ENCODE measurements at regions of chr1 and their contacts with region 1.

Region 1: DNA sequence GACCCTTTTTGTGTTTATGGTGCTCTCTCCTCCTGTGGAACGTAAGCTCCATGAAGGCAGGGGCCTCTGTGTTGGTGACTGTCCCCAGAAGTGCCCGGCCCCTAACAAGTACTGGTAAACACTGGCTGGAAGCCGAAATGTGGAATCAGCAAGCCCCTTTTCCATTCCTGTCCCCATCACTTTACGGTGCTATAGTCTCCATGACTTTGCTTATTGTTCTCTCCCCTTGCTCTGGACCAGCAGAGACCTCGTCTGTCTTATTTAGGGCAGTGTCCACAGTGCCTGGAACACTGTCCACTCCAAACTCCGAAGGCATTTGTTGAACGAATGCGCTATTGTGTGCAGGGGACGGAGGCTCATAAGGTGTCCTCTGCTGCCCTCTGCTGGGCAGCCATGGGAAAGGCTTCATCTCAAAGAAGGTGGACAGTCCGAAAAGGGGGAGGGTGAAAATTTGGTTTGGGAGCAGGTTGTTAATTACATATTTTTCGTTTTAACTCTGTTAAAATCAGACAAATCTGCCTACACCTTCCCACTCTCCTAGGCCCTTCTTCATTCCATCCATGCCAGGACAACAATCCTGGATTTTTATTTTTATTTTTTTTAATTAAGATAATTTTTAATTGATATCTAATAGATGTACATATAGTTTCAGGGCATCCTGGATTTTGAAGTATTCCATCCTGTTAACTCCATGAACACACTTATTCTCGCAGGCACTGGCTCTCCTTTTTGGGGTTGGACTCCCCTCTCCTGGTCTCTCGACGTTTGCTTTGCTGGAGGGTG is 115.6 kb downstream of the PGBD5 start:
- DNase-seq: peak; percentile 64
- ATAC-seq: peak; percentile 80
- H3K4me3 Mint-ChIP-seq: no peak overlapping the region
- H3K27ac Mint-ChIP-seq: no peak overlapping the region
- H3K4me1 Mint-ChIP-seq: peaks cover 17% of the 10 kb centered on the region
- H3K27me3 Mint-ChIP-seq: peaks cover 4% of the 10 kb centered on the region
- CTCF ChIP-seq: peak; percentile 89

Region 2: DNA sequence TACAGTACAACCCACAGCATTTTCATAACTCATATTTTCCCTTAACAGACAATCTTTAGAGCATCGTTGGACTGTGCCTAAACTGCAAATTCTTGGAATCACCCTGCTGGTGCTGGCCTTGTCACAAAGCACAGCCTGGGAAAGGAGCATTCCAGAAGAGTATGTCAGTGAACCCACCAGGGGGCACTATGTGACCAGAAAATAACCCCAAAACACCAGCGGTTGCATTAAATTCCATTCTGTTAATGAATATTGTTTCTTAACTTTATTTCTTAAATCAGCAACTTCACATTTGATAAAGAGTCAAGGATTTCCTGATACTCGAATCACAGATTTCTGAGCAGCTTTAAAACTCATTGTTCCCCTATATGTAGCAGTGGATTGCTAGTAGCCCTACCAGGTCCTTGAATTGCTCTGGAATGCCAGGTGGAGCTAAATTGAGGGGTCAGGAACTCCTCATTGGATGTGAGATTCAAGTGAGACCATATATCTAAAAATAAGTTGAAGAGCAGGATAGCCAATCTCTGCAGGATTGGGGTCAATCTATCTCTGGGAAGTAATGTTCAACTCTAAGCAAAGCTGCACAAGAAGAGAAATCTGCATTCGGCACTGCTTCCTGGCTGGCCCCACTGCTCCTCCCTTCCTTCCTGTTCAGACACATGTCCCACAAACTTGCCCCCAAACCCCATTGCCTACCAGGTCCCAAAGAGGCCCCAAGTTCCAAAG is 1052.4 kb before region 1 on chr1:
- CTCF ChIA-PET with region 1: no interaction called
- POLR2A ChIA-PET with region 1: no interaction called
- intact Hi-C with region 1: loop called (anchors 1 kb)
- DNase-seq: no peak
- ATAC-seq: peak; percentile 64
- H3K4me3 Mint-ChIP-seq: no peak overlapping the region
- H3K27ac Mint-ChIP-seq: no peak overlapping the region
- H3K4me1 Mint-ChIP-seq: peaks cover 11% of the 10 kb centered on the region
- H3K27me3 Mint-ChIP-seq: no peaks in the 10 kb centered on the region
- CTCF ChIP-seq: peak; percentile 36

Region 3: DNA sequence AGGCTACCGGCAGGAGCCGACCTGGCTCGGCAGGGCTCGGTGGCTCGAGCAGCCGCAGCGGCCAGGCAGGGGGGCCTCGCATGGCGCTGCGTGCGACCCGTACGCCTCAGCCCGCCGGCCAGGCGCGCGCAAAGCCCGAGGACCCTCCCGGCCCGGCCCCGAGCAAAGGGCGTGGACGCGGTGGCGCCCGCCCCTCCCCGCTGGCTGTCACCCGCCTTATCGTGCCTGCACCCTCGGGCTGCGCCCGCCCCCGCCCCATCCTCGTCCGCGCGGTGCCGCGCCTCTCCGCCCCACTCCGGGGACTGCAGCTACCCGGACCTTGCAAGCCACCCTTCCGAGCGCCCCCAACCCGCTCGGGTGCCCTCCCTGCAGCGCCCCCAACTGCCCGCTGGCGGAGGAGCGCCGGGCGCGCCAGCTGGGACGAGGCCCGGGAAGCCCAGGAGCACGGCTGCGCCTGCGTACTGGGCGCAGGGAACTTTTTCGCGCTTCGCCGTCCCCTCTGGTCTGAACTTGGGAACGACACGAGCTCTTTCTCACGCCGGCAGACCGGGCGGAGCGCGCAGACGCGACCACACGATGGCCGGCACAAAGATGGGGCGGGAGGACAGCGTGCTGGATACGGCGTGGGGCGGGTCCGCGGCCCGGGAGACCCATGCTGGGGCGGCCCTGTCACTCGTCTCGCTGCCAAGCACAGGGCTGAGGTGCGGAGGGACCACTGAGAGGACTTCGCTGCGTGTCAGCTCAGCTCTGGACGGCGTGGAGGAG is 751.8 kb before region 1 on chr1 and contains the start of gene ABCB10:
- CTCF ChIA-PET with region 1: no interaction called
- POLR2A ChIA-PET with region 1: no interaction called
- intact Hi-C with region 1: loop called (anchors 5 kb)
- DNase-seq: peak; percentile 91
- ATAC-seq: peak; percentile 80
- H3K4me3 Mint-ChIP-seq: peak within 1 kb of the TSS; percentile 95
- H3K27ac Mint-ChIP-seq: peak within 1 kb of the TSS; percentile 90
- H3K4me1 Mint-ChIP-seq: peaks cover 31% of the 10 kb centered on the region
- H3K27me3 Mint-ChIP-seq: no peaks in the 10 kb centered on the region
- CTCF ChIP-seq: no peak
- total RNA-seq, gene ABCB10: 11.7 and 14.5 TPM in 2 replicates

Region 4: DNA sequence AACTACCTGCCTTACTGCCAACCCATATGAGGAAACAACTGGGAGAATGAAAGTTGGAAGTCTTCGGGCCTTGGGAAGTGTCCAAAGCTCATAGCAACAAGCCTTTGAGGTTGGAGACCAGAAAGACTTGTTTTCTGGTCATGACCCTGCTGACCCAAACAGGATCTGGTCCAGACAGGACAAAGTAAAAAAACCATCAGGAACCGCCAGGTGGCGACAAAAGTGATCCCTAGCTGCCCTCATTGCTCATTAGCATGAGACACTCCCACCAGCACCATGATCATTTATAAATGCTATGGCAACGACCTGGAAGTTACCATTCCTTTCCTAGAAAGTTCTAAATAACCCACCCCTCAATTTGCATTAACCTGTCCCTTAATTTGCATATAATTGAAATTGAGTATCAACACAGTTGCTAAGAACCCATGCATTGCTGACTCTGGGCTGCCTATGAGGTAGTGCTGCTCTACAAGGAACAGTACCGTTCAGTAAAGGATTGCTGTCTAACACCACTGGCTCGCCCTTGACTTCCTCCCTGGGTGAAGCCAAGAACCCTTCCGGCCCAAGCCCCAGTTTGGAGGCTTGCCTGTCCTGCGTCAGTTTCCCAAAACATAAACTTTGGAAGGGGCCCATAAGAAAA is 595.5 kb before region 1 on chr1:
- CTCF ChIA-PET with region 1: interaction called, 11 read pairs
- POLR2A ChIA-PET with region 1: no interaction called
- intact Hi-C with region 1: loop called (anchors 1 kb)
- DNase-seq: peak; percentile 24
- ATAC-seq: peak; percentile 47
- H3K4me3 Mint-ChIP-seq: no peak overlapping the region
- H3K27ac Mint-ChIP-seq: no peak overlapping the region
- H3K4me1 Mint-ChIP-seq: peaks cover 2% of the 10 kb centered on the region
- H3K27me3 Mint-ChIP-seq: no peaks in the 10 kb centered on the region
- CTCF ChIP-seq: no peak

Region 5: DNA sequence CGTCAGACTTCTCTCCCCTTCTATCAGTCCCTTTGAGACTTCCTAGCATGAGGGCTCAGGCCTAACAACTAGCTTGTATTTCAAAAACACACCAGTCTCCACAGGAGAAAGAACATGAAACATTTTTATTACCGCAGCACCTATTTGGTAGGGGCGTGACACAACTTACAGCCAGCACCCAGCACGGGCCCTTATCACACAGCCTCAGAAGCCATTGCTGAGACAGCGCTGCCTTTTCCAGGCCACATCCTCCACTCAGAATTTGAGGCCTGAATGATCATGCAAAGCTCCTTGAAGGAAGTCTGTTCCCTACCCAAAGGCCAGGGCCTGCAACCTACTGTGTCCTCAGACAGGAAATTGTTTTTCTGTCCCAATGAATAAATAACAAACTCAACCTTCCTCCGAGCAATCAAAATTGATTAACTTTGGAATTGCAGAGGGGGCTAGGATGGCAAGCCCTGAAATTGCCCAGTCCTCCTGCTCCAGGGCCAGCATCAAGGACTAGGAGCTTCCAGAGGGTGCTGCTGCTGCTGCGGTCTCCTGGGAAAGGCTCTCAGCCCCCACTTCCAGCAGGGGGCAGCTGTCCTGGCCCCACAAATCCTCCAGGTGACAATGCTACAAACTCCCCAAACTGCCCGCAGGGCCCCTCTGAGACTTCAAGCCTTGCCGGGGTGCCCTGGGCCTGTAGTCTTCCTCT is 337.8 kb before region 1 on chr1:
- CTCF ChIA-PET with region 1: no interaction called
- POLR2A ChIA-PET with region 1: no interaction called
- intact Hi-C with region 1: loop called (anchors 2 kb)
- DNase-seq: no peak
- ATAC-seq: no peak
- H3K4me3 Mint-ChIP-seq: no peak overlapping the region
- H3K27ac Mint-ChIP-seq: no peak overlapping the region
- H3K4me1 Mint-ChIP-seq: no peaks in the 10 kb centered on the region
- H3K27me3 Mint-ChIP-seq: no peaks in the 10 kb centered on the region
- CTCF ChIP-seq: no peak

Region 6: DNA sequence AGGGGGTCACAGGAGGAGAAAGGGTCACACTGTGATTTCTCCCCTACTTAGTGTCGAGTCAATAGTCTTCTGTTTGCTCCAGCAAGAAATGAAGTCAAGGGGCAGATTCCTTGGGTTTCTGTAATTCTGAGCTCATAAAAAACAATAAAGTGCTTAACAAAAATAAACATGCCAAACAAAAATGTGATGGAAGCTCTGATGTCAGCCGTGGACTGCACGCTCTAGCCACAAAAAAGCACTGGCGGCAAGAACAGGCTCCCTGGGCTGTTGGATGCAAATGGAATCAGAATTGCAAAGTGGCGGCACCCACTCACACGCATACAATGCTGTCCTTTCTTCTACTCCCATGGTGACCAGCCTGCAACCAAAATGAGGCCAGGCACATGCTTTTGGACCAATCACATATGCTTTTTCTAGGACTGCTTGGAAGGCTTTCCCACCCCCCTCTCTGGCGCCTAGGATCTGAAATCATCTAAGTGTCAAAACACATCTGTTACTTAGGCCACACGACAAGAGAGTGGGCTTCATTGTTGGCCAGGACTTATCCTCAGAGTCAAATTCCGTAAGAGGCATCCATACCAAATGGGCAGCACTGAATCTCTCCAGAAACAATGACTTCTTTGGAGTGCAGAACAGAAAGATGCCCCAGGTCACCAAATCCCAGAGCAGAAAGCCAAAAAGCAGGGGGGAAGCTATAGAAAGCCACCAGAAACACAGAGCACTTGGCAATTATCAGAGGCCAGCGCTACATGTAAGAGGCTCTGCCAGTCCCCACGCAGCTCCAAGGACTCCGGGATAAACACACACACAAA is 548.6 kb after region 1 on chr1:
- CTCF ChIA-PET with region 1: no interaction called
- POLR2A ChIA-PET with region 1: no interaction called
- intact Hi-C with region 1: no loop called
- DNase-seq: no peak
- ATAC-seq: no peak
- H3K4me3 Mint-ChIP-seq: no peak overlapping the region
- H3K27ac Mint-ChIP-seq: no peak overlapping the region
- H3K4me1 Mint-ChIP-seq: peaks cover 6% of the 10 kb centered on the region
- H3K27me3 Mint-ChIP-seq: no peaks in the 10 kb centered on the region
- CTCF ChIP-seq: no peak

Measured in activated B cell treated with CpG ODN at 0.5 μM for 24 hours (primary cell).